Right lobe of liver (tissue), 6 donors: ENCODE measurements at regions of chr2 and their contacts with region 1.

Region 1: GRCh38 chr2:199704358-199705238 is 146.4 kb downstream of the FTCDNL1 start:
- DNase-seq: peak in 1 of 3 donors; percentile 59
- ATAC-seq: peak; percentile 98 to 100 (median 99)
- H3K4me3 ChIP-seq: no peak overlapping the region
- H3K27ac ChIP-seq: no peak overlapping the region
- H3K4me1 ChIP-seq: no peaks in the 10 kb centered on the region
- H3K27me3 ChIP-seq: no peaks in the 10 kb centered on the region
- CTCF ChIP-seq: peak; percentile 62 to 88 (median 74)
- POLR2A ChIP-seq: no peak

Region 2: DNA sequence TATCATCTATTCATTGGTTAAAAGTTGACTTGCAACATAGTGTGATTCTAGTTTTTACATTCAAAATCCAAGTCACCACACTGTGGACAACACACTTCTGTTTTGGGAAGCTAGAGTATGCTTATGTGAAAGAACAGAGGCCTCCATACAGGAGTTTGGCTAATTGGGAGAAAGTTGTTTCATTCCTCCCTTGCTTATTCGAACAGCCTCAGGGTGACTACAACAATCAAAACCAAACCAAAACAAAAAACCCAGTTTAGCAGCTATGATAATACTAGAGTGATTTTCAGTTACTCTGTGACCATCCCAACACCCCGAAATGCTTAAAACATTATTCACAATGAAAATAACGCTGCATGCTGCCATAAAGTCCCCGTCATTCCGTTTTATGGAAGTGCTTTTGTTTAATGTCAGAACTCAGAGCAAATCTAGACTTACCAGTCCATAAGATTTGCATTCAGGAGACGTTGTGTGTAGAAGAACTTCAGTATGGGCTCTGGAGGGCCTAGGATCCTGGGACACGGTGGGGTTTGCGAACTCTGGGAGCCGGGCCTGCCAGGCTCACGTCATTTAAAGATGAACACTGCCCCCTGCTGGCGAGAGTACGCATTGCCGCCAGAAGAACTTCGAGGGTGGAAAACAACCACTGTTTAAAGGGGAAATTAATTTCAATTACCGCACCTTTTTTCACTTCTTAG is 35.0 kb after region 1 on chr2:
- intact Hi-C with region 1: loop called in 1 of 2 experiments (anchors 5 kb)
- DNase-seq: peak; percentile 62 to 76 (median 75)
- ATAC-seq: peak; percentile 72 to 82 (median 78)
- H3K4me3 ChIP-seq: no peak overlapping the region
- H3K27ac ChIP-seq: peak overlapping the region; percentile 11 to 88 (median 83)
- H3K4me1 ChIP-seq: peaks cover 0 to 32% (median 7%) of the 10 kb centered on the region in 4 donors
- H3K27me3 ChIP-seq: no peaks in the 10 kb centered on the region
- CTCF ChIP-seq: peak; percentile 84 to 97 (median 91)
- POLR2A ChIP-seq: no peak

Region 3: GRCh38 chr2:199895406-199895805 is 190.8 kb after region 1 on chr2:
- intact Hi-C with region 1: no loop called
- DNase-seq: no peak
- ATAC-seq: no peak
- H3K4me3 ChIP-seq: no peak overlapping the region
- H3K27ac ChIP-seq: no peak overlapping the region
- H3K4me1 ChIP-seq: no peaks in the 10 kb centered on the region
- H3K27me3 ChIP-seq: no peaks in the 10 kb centered on the region
- CTCF ChIP-seq: no peak
- POLR2A ChIP-seq: no peak